ENCODE measurements at regions of chr6 and their contacts with region 1.

Region 1: GRCh38 chr6:79404681-79405156 is 132.5 kb downstream of the LCA5 start:
- DNase-seq: no peak
- H3K4me3 ChIP-seq: no peak overlapping the region
- H3K27ac ChIP-seq: no peak overlapping the region
- H3K4me1 ChIP-seq: peaks cover 0 to 4% (median 0%) of the 10 kb centered on the region in 4 experiments; a peak in 4 of 7 replicates
- H3K27me3 ChIP-seq: no peaks in the 10 kb centered on the region
- CTCF ChIP-seq: no peak
- EP300 ChIP-seq: no peak
- POLR2A ChIP-seq: no peak
- RAD21 ChIP-seq: no peak

Region 2: DNA sequence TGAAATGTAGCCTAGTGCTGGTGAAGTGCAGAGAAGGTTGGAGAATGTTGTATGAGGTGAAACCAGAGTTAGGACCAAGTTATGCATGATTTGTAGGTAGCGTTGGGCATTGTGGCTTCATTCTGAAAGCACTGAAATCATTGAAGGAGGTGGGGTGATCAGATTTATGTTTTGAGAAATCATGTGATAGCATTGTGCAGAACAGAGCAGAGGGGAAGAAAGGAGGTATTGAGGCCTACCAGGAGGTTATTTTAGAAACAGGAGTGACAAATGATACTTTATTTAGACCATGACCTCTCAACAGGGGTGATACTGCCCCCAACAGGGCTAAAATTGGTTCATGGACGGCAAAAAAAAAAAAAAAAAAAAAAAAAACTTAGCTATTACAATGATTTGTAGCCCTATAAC is 154.6 kb before region 1 on chr6:
- CTCF ChIA-PET with region 1: no interaction called
- POLR2A ChIA-PET with region 1: no interaction called
- DNase-seq: no peak
- H3K4me3 ChIP-seq: no peak overlapping the region
- H3K27ac ChIP-seq: no peak overlapping the region
- H3K4me1 ChIP-seq: no peaks in the 10 kb centered on the region
- H3K27me3 ChIP-seq: no peaks in the 10 kb centered on the region
- CTCF ChIP-seq: peak in 2 of 3 experiments; percentile 12 to 22; a peak in 2 of 4 replicates
- EP300 ChIP-seq: no peak
- POLR2A ChIP-seq: no peak
- RAD21 ChIP-seq: peak; percentile 57 to 62

Region 3: DNA sequence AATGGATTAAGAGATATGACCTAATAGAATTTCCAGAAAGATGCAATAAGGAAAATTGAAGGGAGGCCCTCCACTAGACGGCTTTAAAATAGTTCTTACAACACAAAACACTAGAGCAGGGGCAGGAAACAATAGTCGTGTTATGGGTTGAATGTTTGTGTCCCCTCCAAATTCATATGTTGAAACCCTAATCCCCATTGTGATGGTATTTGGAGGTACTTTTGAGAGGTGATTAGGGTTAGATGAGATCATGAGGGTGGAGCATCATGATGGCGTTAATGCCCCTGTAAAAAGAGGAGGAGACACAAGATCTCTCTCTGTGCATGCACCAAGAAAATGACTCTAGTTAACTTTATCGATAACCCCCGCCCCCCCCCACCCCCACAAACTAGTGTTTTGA is 66.2 kb before region 1 on chr6:
- CTCF ChIA-PET with region 1: no interaction called
- POLR2A ChIA-PET with region 1: no interaction called
- DNase-seq: peak in 1 of 2 experiments; percentile 17
- H3K4me3 ChIP-seq: peak overlapping the region in 1 of 4 experiments; percentile 20; a peak in 1 of 8 replicates
- H3K27ac ChIP-seq: no peak overlapping the region
- H3K4me1 ChIP-seq: peaks cover 0 to 7% (median 2%) of the 10 kb centered on the region in 4 experiments; a peak in 3 of 7 replicates
- H3K27me3 ChIP-seq: no peaks in the 10 kb centered on the region
- CTCF ChIP-seq: no peak
- EP300 ChIP-seq: no peak
- POLR2A ChIP-seq: no peak
- RAD21 ChIP-seq: no peak

Region 4: DNA sequence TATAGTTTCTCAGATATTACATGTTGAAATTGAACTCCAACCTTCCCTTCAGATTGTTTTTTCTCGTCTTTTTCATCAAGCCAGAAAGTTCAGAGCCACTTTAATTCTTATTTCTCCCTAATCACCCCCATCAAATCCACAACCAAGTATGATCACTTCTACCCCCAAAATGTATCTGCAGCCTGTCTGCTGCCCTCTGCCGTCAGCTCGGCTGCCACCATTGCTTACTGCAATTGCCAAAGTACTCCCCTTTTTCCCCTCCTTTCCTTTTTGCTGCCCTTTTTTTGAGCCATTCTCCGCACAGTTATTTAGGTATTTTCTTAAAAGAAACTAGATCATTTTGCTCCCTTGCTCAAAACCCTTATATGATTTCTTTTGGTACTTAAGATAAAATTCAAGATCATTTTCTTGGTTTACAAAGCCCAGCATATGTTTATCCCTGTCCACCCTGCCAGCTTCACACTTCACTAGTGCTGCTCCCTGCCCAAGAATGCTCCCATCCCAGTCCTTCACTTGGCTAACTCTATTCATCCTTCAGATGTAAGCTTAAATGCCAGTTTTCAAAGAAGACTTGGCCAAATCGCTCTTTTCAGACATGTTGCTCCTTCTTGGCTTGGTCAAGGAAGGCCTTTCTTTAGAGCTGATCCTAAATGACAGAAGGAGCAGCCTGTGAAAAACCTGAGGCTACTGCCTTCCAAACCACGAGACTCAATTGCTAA is 290.1 kb after region 1 on chr6:
- CTCF ChIA-PET with region 1: interaction called, 13 read pairs
- POLR2A ChIA-PET with region 1: no interaction called
- DNase-seq: no peak
- H3K4me3 ChIP-seq: no peak overlapping the region
- H3K27ac ChIP-seq: no peak overlapping the region
- H3K4me1 ChIP-seq: peaks cover 0 to 2% (median under 1%) of the 10 kb centered on the region in 4 experiments; a peak in 2 of 7 replicates
- H3K27me3 ChIP-seq: no peaks in the 10 kb centered on the region
- CTCF ChIP-seq: peak; percentile 52 to 77 (median 71)
- EP300 ChIP-seq: no peak
- POLR2A ChIP-seq: no peak
- RAD21 ChIP-seq: peak; percentile 53 to 59

Measured in H1 (cell line).